ENCODE measurements at regions of chrX and their contacts with region 1.

Region 1: GRCh38 chrX:138775517-138775916 is 64.0 kb upstream of the FGF13 start:
- DNase-seq: peak; percentile 71
- H3K4me3 ChIP-seq: no peak overlapping the region
- H3K27ac ChIP-seq: no peak overlapping the region
- H3K4me1 ChIP-seq: peaks cover 22% of the 10 kb centered on the region
- H3K27me3 ChIP-seq: no peaks in the 10 kb centered on the region
- CTCF ChIP-seq: peak; percentile 60

Region 2: DNA sequence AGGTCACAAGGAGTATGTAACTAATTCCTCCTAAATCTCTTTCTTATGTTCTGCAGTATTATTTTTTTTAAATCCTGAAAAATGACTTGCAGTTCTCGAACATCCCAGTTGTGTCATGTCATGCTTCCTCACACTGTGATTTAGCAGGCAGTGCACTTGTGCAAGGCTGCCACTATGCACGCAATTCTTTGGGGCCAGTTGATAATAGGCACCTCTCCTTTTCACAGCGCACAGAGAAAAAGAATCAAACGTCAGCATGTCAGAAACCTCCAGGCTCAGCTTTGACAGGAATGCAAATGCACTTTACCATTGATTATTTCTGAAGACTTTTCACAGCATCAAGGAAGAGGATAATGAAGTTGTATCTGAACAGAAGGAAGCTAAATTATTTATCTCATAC is 126.9 kb before region 1 on chrX:
- CTCF ChIA-PET with region 1: no interaction called
- POLR2A ChIA-PET with region 1: no interaction called
- intact Hi-C with region 1: no loop called
- DNase-seq: peak; percentile 3
- H3K4me3 ChIP-seq: no peak overlapping the region
- H3K27ac ChIP-seq: no peak overlapping the region
- H3K4me1 ChIP-seq: no peaks in the 10 kb centered on the region
- H3K27me3 ChIP-seq: no peaks in the 10 kb centered on the region
- CTCF ChIP-seq: no peak

Region 3: GRCh38 chrX:138756234-138756633 is 19.3 kb before region 1 on chrX:
- CTCF ChIA-PET with region 1: no interaction called
- POLR2A ChIA-PET with region 1: no interaction called
- intact Hi-C with region 1: no loop called
- DNase-seq: peak; percentile 76
- H3K4me3 ChIP-seq: no peak overlapping the region
- H3K27ac ChIP-seq: no peak overlapping the region
- H3K4me1 ChIP-seq: peaks cover 5% of the 10 kb centered on the region
- H3K27me3 ChIP-seq: no peaks in the 10 kb centered on the region
- CTCF ChIP-seq: peak; percentile 64

Region 4: GRCh38 chrX:138908577-138908976 is 133.1 kb after region 1 on chrX:
- CTCF ChIA-PET with region 1: no interaction called
- POLR2A ChIA-PET with region 1: no interaction called
- intact Hi-C with region 1: loop called (anchors 5 kb)
- DNase-seq: no peak
- H3K4me3 ChIP-seq: no peak overlapping the region
- H3K27ac ChIP-seq: peak overlapping the region; percentile 45
- H3K4me1 ChIP-seq: peaks cover 17% of the 10 kb centered on the region
- H3K27me3 ChIP-seq: no peaks in the 10 kb centered on the region
- CTCF ChIP-seq: no peak

Region 5: GRCh38 chrX:139429913-139430312 is 654.4 kb after region 1 on chrX:
- CTCF ChIA-PET with region 1: no interaction called
- POLR2A ChIA-PET with region 1: no interaction called
- intact Hi-C with region 1: loop called (anchors 10 kb)
- DNase-seq: peak; percentile 48
- H3K4me3 ChIP-seq: no peak overlapping the region
- H3K27ac ChIP-seq: no peak overlapping the region
- H3K4me1 ChIP-seq: no peaks in the 10 kb centered on the region
- H3K27me3 ChIP-seq: no peaks in the 10 kb centered on the region
- CTCF ChIP-seq: peak; percentile 54

Measured in A673 (cell line).